Endothelial cell of umbilical vein (primary cell): ENCODE measurements at regions of chr7 and their contacts with region 1.

Region 1: DNA sequence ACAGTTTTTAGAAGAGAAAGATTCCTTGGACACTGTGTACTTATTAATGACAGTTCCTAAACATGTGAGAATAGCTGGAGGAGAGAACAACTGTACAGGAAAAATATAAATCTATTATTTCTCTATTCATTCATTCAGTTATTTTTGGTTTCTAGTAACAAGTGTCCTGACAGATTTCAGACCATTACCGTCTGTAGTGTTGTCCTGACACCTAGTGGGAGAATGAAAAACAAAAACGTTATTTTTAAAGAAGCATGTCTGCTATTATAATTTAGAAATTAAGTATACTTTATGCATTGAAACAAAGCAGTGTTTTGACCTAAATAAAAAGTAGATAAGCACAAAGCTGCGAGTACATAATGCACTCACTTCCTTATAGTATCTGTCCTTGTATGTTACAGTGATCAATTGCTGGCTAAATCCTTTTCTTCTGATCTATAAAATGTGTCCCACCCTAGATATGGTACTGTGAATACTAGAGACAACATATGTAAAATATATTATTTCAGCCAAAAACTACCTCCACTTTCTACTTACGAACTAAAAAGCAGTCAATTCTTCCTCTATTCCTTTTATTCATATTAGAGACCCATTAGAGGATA is 575.6 kb downstream of the ARL4A start:
- DNase-seq: peak; percentile 70
- H3K4me3 ChIP-seq: no peak overlapping the region
- H3K27ac ChIP-seq: no peak overlapping the region
- H3K4me1 ChIP-seq: no peaks in the 10 kb centered on the region
- H3K27me3 ChIP-seq: peaks cover 0 to 3% of the 10 kb centered on the region in 2 experiments
- CTCF ChIP-seq: peak; percentile 25 to 33
- POLR2A ChIP-seq: no peak

Region 2: GRCh38 chr7:12524794-12525386 is 738.1 kb before region 1 on chr7:
- CTCF ChIA-PET with region 1: interaction called, 35 read pairs
- POLR2A ChIA-PET with region 1: no interaction called
- dilution Hi-C with region 1: no loop called
- intact Hi-C with region 1: loop called (anchors 1 kb)
- DNase-seq: peak; percentile 75
- H3K4me3 ChIP-seq: no peak overlapping the region
- H3K27ac ChIP-seq: no peak overlapping the region
- H3K4me1 ChIP-seq: no peaks in the 10 kb centered on the region
- H3K27me3 ChIP-seq: peaks cover 2 to 24% of the 10 kb centered on the region in 2 experiments
- CTCF ChIP-seq: peak; percentile 7 to 33
- POLR2A ChIP-seq: no peak

Region 3: DNA sequence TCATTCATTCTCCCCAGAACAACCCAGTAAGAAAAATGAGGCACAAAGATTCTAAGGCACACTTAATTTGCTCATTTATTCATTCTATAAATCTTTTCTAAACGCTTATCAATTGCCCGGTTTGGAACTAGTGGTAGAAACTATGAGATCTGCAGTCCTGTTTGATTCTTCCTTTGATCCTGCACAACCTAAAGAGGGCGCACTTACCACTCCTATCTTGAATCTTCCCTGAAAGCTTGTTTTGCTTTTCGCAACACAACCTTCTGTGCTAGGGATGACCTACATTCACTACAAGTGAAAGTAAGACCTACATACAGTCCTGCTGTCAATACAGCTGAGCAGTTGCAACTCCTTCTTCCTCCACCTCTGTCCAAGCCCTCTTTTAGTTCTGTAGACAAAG is 588.2 kb before region 1 on chr7:
- CTCF ChIA-PET with region 1: interaction called, 19 read pairs
- POLR2A ChIA-PET with region 1: no interaction called
- dilution Hi-C with region 1: no loop called
- intact Hi-C with region 1: loop called (anchors 2 kb)
- DNase-seq: peak; percentile 50
- H3K4me3 ChIP-seq: no peak overlapping the region
- H3K27ac ChIP-seq: no peak overlapping the region
- H3K4me1 ChIP-seq: no peaks in the 10 kb centered on the region
- H3K27me3 ChIP-seq: no peaks in the 10 kb centered on the region
- CTCF ChIP-seq: peak; percentile 39 to 43
- POLR2A ChIP-seq: no peak

Region 4: GRCh38 chr7:13201628-13202027 is 61.4 kb before region 1 on chr7:
- CTCF ChIA-PET with region 1: no interaction called
- POLR2A ChIA-PET with region 1: no interaction called
- dilution Hi-C with region 1: no loop called
- intact Hi-C with region 1: no loop called
- DNase-seq: no peak
- H3K4me3 ChIP-seq: no peak overlapping the region
- H3K27ac ChIP-seq: no peak overlapping the region
- H3K4me1 ChIP-seq: no peaks in the 10 kb centered on the region
- H3K27me3 ChIP-seq: no peaks in the 10 kb centered on the region
- CTCF ChIP-seq: no peak
- POLR2A ChIP-seq: no peak

Region 5: GRCh38 chr7:13898967-13899670 is 636.1 kb after region 1 on chr7:
- CTCF ChIA-PET with region 1: no interaction called
- POLR2A ChIA-PET with region 1: no interaction called
- dilution Hi-C with region 1: no loop called
- intact Hi-C with region 1: no loop called
- DNase-seq: no peak
- H3K4me3 ChIP-seq: no peak overlapping the region
- H3K27ac ChIP-seq: no peak overlapping the region
- H3K4me1 ChIP-seq: no peaks in the 10 kb centered on the region
- H3K27me3 ChIP-seq: no peaks in the 10 kb centered on the region
- CTCF ChIP-seq: no peak
- POLR2A ChIP-seq: no peak